WTC11 (cell line): ENCODE measurements at regions of chr22 and their contacts with region 1.

Region 1: DNA sequence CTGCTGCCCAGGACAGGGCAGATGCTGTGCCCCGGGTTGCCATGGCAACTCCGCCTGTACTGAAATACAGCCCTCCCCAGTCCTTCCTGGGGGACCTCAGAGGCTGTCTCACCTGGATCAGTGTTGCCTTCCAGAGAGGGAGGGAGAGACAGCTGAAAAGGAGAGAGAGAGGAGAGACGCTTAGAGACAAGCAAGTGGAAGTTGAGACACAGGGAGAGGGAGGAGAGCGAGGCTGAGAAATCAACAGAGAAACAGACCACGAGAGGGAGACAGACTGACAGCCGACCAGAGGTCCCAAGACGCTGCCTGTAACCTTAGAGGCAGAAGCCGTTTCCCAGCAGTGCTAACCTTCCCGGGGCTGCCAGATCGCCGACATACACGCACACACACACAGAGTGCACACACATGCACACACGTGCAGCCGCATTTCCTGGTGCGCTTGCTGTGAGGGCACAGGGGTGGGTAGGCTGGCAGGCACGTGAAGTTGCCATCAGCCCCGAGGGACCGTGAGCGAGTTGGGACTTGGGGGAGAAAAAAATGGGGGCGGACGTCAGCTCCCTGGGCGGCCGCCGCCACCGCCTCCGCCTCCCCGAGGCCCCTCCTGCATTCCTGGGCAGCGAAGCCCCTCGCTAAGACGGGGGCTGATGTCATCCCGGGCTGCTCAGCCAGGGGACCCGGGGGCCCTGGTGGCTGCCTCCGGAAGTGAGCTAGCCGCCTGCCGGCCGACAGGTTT is 88.6 kb upstream of the CRYBB3 start:
- DNase-seq: peak; percentile 80
- ATAC-seq: peak; percentile 82
- H3K4me3 Mint-ChIP-seq: peak overlapping the region; percentile 73
- H3K27ac Mint-ChIP-seq: peak overlapping the region; percentile 91
- H3K4me1 Mint-ChIP-seq: peaks cover 33% of the 10 kb centered on the region
- H3K27me3 Mint-ChIP-seq: no peaks in the 10 kb centered on the region
- CTCF ChIP-seq: 0 out of 2 replicates have a peak, but pooled peaks have one; percentile 3

Region 2: GRCh38 chr22:24961217-24961844 is 149.7 kb before region 1 on chr22:
- CTCF ChIA-PET with region 1: no interaction called
- POLR2A ChIA-PET with region 1: no interaction called
- DNase-seq: no peak
- ATAC-seq: no peak
- H3K4me3 Mint-ChIP-seq: no peak overlapping the region
- H3K27ac Mint-ChIP-seq: no peak overlapping the region
- H3K4me1 Mint-ChIP-seq: peaks cover 11% of the 10 kb centered on the region; the same call in 1 of the 2 replicates
- H3K27me3 Mint-ChIP-seq: no peaks in the 10 kb centered on the region
- CTCF ChIP-seq: no peak

Region 3: GRCh38 chr22:25045159-25045558 is 65.9 kb before region 1 on chr22:
- CTCF ChIA-PET with region 1: no interaction called
- POLR2A ChIA-PET with region 1: no interaction called
- DNase-seq: no peak
- ATAC-seq: no peak
- H3K4me3 Mint-ChIP-seq: no peak overlapping the region
- H3K27ac Mint-ChIP-seq: no peak overlapping the region
- H3K4me1 Mint-ChIP-seq: peaks cover 4% of the 10 kb centered on the region
- H3K27me3 Mint-ChIP-seq: no peaks in the 10 kb centered on the region
- CTCF ChIP-seq: no peak

Region 4: DNA sequence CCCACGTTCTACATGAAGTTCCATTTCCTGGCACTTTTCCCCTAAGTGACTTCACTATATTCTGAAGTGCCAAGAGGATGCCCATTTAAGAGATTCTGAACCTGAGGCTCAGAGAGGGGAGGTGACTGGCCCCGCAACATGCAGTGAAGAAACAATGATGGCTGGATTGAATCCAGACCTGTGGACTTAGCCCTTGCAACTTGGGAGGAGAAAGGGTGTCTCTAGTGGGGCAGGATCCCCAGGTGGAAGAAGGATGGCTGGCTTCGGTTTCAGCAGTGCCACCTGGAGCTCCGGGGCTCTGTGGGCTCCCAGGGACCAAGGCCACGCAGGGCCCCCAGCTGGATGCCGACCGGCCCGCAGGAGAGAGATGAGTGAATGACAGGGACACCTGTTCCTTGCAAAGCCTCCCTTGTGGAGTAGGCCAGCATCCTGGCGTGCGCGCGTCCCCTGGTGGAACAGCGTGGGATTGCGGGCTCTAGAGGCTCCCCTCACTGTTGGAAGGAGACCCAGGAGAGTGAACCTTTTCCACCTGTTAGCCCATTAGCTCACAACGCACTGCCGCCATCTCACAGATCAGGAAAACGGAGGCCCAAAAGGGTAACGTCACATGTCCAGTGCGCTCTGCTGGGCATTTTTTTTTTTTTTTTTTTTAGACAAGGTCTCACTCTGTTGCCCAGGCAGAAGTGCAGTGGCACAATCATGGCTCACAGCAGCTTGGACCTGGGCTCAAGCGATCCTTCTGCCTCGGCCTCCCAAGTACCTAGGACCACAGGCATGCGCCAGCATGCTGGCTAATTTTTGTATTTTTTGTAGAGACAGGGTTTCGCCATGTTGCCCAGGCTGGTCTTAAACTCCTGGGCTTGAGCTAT is 53.8 kb before region 1 on chr22:
- CTCF ChIA-PET with region 1: interaction called, 11 read pairs
- POLR2A ChIA-PET with region 1: no interaction called
- DNase-seq: peak; percentile 95
- ATAC-seq: peak; percentile 96
- H3K4me3 Mint-ChIP-seq: no peak overlapping the region
- H3K27ac Mint-ChIP-seq: peak overlapping the region; percentile 81; the same call in 1 of the 2 replicates
- H3K4me1 Mint-ChIP-seq: peaks cover 22% of the 10 kb centered on the region
- H3K27me3 Mint-ChIP-seq: no peaks in the 10 kb centered on the region
- CTCF ChIP-seq: peak; percentile 83

Region 5: DNA sequence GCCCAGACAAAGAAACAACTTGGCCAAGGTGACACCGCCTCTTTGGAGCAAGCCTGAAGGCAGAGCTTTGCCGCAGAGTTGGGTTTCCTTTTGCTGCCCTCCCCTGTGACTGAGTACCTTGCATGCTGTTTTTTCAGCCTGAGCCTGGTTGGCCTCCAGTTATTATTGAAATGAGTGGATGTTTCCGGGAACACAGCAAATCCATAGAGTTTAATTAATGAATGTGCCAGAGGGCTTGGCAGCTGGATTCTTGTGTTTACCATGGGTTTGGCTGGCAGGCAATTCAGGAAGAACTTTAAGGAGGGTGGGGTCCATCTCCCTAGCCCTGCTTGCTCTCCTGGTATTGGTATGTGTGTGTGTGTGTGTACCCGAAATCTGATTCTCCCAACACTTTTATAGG is 23.0 kb after region 1 on chr22:
- CTCF ChIA-PET with region 1: interaction called, 81 read pairs
- POLR2A ChIA-PET with region 1: no interaction called
- DNase-seq: no peak
- ATAC-seq: no peak
- H3K4me3 Mint-ChIP-seq: no peak overlapping the region
- H3K27ac Mint-ChIP-seq: no peak overlapping the region
- H3K4me1 Mint-ChIP-seq: peaks cover 30% of the 10 kb centered on the region
- H3K27me3 Mint-ChIP-seq: no peaks in the 10 kb centered on the region
- CTCF ChIP-seq: no peak

Region 6: GRCh38 chr22:25153961-25154666 is 43.1 kb after region 1 on chr22:
- CTCF ChIA-PET with region 1: interaction called, 22 read pairs
- POLR2A ChIA-PET with region 1: no interaction called
- DNase-seq: no peak
- ATAC-seq: peak; percentile 92
- H3K4me3 Mint-ChIP-seq: no peak overlapping the region
- H3K27ac Mint-ChIP-seq: peak overlapping the region; percentile 41
- H3K4me1 Mint-ChIP-seq: peaks cover 9% of the 10 kb centered on the region
- H3K27me3 Mint-ChIP-seq: no peaks in the 10 kb centered on the region
- CTCF ChIP-seq: no peak

Region 7: GRCh38 chr22:25202290-25202921 is 91.4 kb after region 1 on chr22:
- CTCF ChIA-PET with region 1: interaction called, 22 read pairs
- POLR2A ChIA-PET with region 1: no interaction called
- DNase-seq: peak; percentile 86
- ATAC-seq: peak; percentile 94
- H3K4me3 Mint-ChIP-seq: no peak overlapping the region
- H3K27ac Mint-ChIP-seq: no peak overlapping the region
- H3K4me1 Mint-ChIP-seq: no peaks in the 10 kb centered on the region
- H3K27me3 Mint-ChIP-seq: no peaks in the 10 kb centered on the region
- CTCF ChIP-seq: peak; percentile 76